ENCODE measurements at regions of chr1 and their contacts with region 1.

Region 1: GRCh38 chr1:225999227-225999911 is at the start of gene SDE2:
- DNase-seq: peak; percentile 99 to 100 (median 100)
- ATAC-seq: peak; percentile 75
- H3K4me3 ChIP-seq: peak within 1 kb of the TSS; percentile 88
- H3K4me3 Mint-ChIP-seq: peak within 1 kb of the TSS; percentile 99
- H3K27ac ChIP-seq: peak within 1 kb of the TSS; percentile 99
- H3K27ac Mint-ChIP-seq: peak within 1 kb of the TSS; percentile 96
- H3K4me1 ChIP-seq: peaks cover 68% of the 10 kb centered on the region
- H3K4me1 Mint-ChIP-seq: peaks cover 83% of the 10 kb centered on the region
- H3K27me3 ChIP-seq: no peaks in the 10 kb centered on the region
- H3K27me3 Mint-ChIP-seq: no peaks in the 10 kb centered on the region
- CTCF ChIP-seq: no peak
- total RNA-seq, gene SDE2: 48.2 to 49.3 TPM

Region 2: GRCh38 chr1:225441314-225442122 is 557.9 kb before region 1 on chr1:
- CTCF ChIA-PET with region 1: no interaction called
- POLR2A ChIA-PET with region 1: interaction called, 30 read pairs
- intact Hi-C with region 1: no loop called
- DNase-seq: peak in 2 of 14 experiments; percentile 21 to 26
- ATAC-seq: no peak
- H3K4me3 ChIP-seq: no peak overlapping the region
- H3K4me3 Mint-ChIP-seq: peak overlapping the region; percentile 66
- H3K27ac ChIP-seq: peak overlapping the region in 1 of 2 donors; percentile 4
- H3K27ac Mint-ChIP-seq: peak overlapping the region; percentile 61
- H3K4me1 ChIP-seq: peaks cover 54% of the 10 kb centered on the region
- H3K4me1 Mint-ChIP-seq: peaks cover 53% of the 10 kb centered on the region
- H3K27me3 ChIP-seq: no peaks in the 10 kb centered on the region
- H3K27me3 Mint-ChIP-seq: no peaks in the 10 kb centered on the region
- CTCF ChIP-seq: peak; percentile 27

Region 3: DNA sequence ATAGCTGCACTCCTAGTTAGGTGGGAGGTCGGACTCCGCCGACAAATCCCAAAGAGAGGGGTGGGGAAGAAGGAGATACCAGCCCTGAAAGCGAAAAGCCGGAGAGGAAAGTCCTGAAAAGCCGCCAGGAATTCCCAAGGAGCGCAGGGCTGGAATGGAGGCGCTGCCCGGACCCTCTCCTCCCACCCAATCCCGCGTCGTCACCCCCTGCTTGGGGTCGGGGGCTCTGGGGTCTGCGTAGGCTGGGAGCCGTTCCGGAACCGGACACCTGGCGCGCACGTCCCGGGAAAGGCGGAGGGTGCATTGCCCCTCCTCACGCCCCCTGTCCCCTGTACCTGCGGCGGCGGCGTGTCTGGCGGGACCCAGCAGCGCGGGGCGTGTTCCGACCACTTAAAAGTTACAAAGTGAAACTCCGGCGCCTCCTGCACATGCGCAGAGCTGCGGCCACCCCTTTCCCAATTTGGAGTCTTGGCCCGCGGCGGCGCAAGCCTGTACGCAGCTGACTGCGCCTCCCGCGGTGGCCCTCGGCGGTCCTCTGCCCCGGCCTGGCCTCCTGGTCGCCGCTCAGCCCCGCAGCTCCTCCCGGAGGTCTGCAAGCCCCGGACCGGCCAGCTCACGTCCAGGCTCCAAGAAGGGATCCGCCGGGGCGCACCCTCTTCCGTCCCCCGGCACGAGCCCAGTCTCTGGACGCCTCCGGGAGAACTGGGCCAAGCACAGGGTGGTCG is 117.2 kb before region 1 on chr1 and contains the start of gene TMEM63A:
- CTCF ChIA-PET with region 1: no interaction called
- POLR2A ChIA-PET with region 1: interaction called, 24 read pairs
- intact Hi-C with region 1: no loop called
- DNase-seq: peak; percentile 85 to 95 (median 91)
- ATAC-seq: peak; percentile 64
- H3K4me3 ChIP-seq: peak within 1 kb of the TSS; percentile 74
- H3K4me3 Mint-ChIP-seq: peak within 1 kb of the TSS; percentile 97
- H3K27ac ChIP-seq: peak within 1 kb of the TSS; percentile 87 to 89
- H3K27ac Mint-ChIP-seq: peak within 1 kb of the TSS; percentile 86
- H3K4me1 ChIP-seq: peaks cover 56% of the 10 kb centered on the region
- H3K4me1 Mint-ChIP-seq: peaks cover 47% of the 10 kb centered on the region
- H3K27me3 ChIP-seq: no peaks in the 10 kb centered on the region
- H3K27me3 Mint-ChIP-seq: no peaks in the 10 kb centered on the region
- CTCF ChIP-seq: peak; percentile 33
- total RNA-seq, gene TMEM63A: 199 to 204 TPM

Region 4: DNA sequence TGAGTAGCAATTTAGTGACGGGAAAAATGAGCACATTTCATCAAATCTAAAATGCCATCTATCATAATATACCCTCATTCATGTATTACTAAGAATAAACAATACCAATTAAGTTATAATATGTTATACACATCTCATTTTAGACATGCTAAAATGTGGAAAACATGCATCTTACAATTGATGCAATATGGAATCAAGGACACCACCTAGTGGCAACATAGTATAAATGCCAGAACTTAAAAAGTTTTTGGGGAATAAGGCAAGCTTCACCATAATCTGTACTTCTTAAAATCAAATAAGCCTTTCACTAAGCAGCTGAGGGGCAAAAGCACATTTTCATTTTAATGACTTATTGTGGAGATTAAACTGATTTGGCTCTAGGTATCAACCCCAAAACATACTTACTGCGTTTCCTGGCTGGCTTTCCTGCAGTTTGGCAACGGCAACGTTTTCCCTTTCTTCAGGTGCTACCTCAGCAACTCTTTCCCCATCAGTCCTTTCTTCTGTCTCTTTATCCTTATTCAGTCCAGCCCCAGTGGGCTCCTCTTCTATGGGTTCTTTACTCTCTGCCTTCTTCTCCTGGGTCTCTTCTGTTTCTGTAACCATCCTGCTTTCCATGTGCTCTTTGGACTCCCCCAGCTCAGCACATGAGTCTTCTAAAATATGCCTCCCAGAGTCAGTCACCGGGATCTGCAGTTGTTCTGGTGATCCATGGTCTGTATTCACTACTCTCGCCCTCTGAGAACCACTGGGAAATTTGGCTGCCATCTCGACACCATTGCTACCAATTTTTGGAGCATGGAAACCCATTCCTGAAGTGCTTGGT is 11.7 kb before region 1 on chr1:
- CTCF ChIA-PET with region 1: interaction called, 12 read pairs
- POLR2A ChIA-PET with region 1: interaction called, 26 read pairs
- intact Hi-C with region 1: no loop called
- DNase-seq: peak in 3 of 14 experiments; percentile 50 to 66 (median 66)
- ATAC-seq: peak; percentile 62
- H3K4me3 ChIP-seq: no peak overlapping the region
- H3K4me3 Mint-ChIP-seq: no peak overlapping the region
- H3K27ac ChIP-seq: no peak overlapping the region
- H3K27ac Mint-ChIP-seq: peak overlapping the region; percentile 69
- H3K4me1 ChIP-seq: peaks cover 8% of the 10 kb centered on the region
- H3K4me1 Mint-ChIP-seq: peaks cover 29% of the 10 kb centered on the region
- H3K27me3 ChIP-seq: no peaks in the 10 kb centered on the region
- H3K27me3 Mint-ChIP-seq: no peaks in the 10 kb centered on the region
- CTCF ChIP-seq: peak; percentile 80

Region 5: GRCh38 chr1:226051356-226051755 is 52.0 kb after region 1 on chr1:
- CTCF ChIA-PET with region 1: no interaction called
- POLR2A ChIA-PET with region 1: interaction called, 12 read pairs
- intact Hi-C with region 1: no loop called
- DNase-seq: peak in 2 of 14 experiments; percentile 36 to 56
- ATAC-seq: no peak
- H3K4me3 ChIP-seq: no peak overlapping the region
- H3K4me3 Mint-ChIP-seq: no peak overlapping the region
- H3K27ac ChIP-seq: no peak overlapping the region
- H3K27ac Mint-ChIP-seq: no peak overlapping the region
- H3K4me1 ChIP-seq: no peaks in the 10 kb centered on the region
- H3K4me1 Mint-ChIP-seq: no peaks in the 10 kb centered on the region
- H3K27me3 ChIP-seq: no peaks in the 10 kb centered on the region
- H3K27me3 Mint-ChIP-seq: no peaks in the 10 kb centered on the region
- CTCF ChIP-seq: no peak

Region 6: DNA sequence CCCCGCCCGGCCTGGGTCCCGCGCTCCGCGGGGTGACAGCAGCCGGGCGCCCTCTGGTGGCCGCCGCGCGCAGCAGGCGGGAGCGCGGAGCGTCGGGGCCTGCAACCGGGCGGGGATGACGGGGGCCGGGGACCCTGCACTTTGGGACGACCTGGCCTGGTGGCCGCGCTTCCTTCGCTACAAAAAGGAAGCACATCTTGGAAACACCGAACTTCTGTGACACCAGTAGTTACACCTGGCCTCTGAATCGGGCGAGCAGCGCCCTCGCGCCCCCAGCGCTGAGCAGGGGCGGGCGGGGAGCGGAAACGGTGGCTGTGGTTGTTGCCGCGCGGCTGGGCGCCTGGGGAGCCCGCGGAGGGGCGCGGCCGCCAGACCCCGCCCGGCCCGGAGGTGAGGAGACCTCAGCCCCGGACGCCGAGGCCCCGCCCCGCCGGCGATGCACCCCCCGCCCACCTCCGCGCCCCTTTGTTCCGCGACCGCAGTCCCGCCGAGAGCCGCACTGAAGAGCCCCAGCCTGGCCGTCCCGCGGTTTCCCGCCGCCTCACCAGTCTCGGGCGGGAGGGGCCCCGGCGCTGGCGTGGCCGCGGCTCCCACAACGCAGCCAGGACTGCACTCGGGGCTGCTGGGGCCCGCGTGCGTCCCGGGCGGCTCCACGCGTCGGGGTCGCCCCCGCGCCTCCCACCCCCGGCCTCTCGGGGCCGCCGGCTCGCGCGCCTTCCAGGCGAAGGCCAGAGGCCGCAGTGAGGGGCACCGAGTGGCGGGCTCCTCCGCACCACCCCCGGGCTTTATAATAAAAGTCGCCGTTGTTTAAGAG is 122.4 kb after region 1 on chr1:
- CTCF ChIA-PET with region 1: no interaction called
- POLR2A ChIA-PET with region 1: interaction called, 12 read pairs
- intact Hi-C with region 1: loop called (anchors 5 kb)
- DNase-seq: peak; percentile 48 to 90 (median 70)
- ATAC-seq: peak; percentile 54
- H3K4me3 ChIP-seq: peak overlapping the region; percentile 58
- H3K4me3 Mint-ChIP-seq: peak overlapping the region; percentile 80
- H3K27ac ChIP-seq: peak overlapping the region; percentile 45 to 77
- H3K27ac Mint-ChIP-seq: peak overlapping the region; percentile 91
- H3K4me1 ChIP-seq: peaks cover 37% of the 10 kb centered on the region
- H3K4me1 Mint-ChIP-seq: peaks cover 33% of the 10 kb centered on the region
- H3K27me3 ChIP-seq: no peaks in the 10 kb centered on the region
- H3K27me3 Mint-ChIP-seq: no peaks in the 10 kb centered on the region
- CTCF ChIP-seq: peak; percentile 64

Region 7: DNA sequence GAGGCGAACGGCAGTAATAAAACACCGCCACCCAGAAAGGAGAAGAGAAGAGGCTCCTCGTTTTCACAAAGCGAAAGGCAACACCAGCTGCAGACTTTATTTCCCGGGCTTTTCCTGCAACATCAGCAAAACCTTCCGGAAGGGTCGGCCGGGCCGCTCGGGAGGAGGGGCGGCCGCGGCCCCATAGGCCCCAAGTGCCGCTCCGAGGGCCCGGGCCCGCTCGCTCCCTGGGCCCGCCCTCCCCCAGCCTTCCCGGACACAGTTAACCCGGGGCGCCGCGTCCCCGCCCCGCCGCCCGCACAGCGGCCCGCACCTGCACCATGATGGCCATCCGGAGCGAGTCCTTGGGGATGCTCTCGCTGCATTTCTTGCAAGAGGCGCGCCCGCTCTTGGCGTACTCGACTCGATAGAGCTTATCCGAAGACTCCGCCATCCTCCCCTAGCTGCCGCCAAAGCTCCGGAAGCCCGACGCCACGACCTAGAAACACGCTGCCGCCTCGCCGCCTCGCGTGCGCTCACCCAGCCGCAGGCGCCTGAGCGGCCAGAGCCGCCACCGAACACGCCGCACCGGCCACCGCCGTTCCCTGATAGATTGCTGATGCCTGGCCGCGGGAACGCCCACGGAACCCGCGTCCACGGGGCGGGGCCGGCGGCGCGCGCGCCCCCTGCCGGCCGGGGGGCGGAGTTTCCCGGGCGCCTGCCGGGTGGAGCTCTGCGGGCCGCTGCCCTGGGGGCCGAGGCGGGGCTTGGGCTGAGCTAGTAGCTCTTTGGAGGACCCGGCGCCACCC is 408.3 kb after region 1 on chr1 and contains the start of gene PARP1:
- CTCF ChIA-PET with region 1: no interaction called
- POLR2A ChIA-PET with region 1: interaction called, 8 read pairs
- intact Hi-C with region 1: loop called in 1 of 2 experiments (anchors 5 kb)
- DNase-seq: peak; percentile 75 to 95 (median 85)
- ATAC-seq: peak; percentile 82
- H3K4me3 ChIP-seq: peak within 1 kb of the TSS; percentile 79
- H3K4me3 Mint-ChIP-seq: peak within 1 kb of the TSS; percentile 98
- H3K27ac ChIP-seq: peak within 1 kb of the TSS; percentile 48 to 55
- H3K27ac Mint-ChIP-seq: peak within 1 kb of the TSS; percentile 94
- H3K4me1 ChIP-seq: peaks cover 46% of the 10 kb centered on the region
- H3K4me1 Mint-ChIP-seq: peaks cover 55% of the 10 kb centered on the region
- H3K27me3 ChIP-seq: no peaks in the 10 kb centered on the region
- H3K27me3 Mint-ChIP-seq: no peaks in the 10 kb centered on the region
- CTCF ChIP-seq: peak; percentile 69
- total RNA-seq, gene PARP1: 59.3 to 63.6 TPM

Region 8: DNA sequence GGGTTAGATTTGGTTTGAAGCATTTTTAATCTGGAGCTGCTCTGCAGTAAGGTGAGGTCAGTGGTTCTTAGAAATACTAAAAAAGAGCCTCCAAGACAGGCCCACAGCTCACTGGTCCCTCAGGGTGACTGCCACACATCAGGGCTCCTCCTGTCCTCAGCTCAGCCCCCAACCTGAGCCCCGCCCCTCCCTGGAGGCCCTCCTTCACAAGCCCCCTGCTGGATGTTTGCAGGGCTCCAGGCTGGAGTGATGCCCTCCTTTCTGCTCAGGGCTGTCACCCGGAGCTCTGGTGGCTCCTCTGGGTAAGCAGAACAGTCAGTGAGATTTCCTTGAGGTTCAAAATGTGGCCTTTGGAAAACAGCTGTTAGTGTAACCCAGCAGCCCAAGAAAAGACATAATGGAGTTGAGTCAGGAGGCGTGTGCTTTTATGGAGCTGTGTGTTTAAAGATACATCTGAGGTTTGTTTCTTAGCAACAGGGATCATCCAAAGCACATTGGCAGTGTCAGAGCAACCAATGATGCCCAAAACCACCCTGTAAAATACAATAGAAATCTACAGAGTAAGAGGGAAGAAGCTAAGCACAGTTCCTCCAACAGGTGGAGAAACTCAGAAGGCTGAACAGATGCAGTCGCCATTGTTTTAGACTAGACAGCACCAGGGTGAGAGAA is 570.6 kb after region 1 on chr1:
- CTCF ChIA-PET with region 1: no interaction called
- POLR2A ChIA-PET with region 1: no interaction called
- intact Hi-C with region 1: no loop called
- DNase-seq: peak in 5 of 14 experiments; percentile 11 to 41 (median 15)
- ATAC-seq: peak; percentile 78
- H3K4me3 ChIP-seq: no peak overlapping the region
- H3K4me3 Mint-ChIP-seq: no peak overlapping the region
- H3K27ac ChIP-seq: no peak overlapping the region
- H3K27ac Mint-ChIP-seq: no peak overlapping the region
- H3K4me1 ChIP-seq: no peaks in the 10 kb centered on the region
- H3K4me1 Mint-ChIP-seq: no peaks in the 10 kb centered on the region
- H3K27me3 ChIP-seq: peaks cover 0 to 10% of the 10 kb centered on the region in 2 experiments
- H3K27me3 Mint-ChIP-seq: peaks cover 12% of the 10 kb centered on the region
- CTCF ChIP-seq: no peak

Measured in CD4-positive, alpha-beta T cell (primary cell).